Right cardiac atrium (tissue), 5 donors: ENCODE measurements at regions of chr10 and their contacts with region 1.

Region 1: DNA sequence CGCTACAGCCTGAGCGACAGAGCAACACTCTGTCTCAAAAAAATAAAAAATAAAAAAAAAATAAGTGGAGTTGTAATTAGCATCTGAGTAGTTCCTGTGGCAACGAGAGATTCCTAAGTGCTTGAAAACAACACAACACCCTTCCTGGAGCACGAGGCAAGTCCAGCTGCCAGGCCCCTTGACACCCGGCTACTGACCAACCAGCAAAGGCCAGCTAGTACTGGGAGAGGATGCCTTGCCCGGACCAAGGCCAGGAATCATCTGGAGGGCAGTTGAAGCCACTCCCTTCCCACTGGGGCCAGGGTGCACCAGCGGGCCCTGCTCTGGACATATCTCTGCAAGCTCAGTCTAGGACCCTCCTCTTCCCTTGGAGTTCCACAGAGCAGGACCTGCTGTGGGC is 536 bp downstream of the C10orf105 start:
- DNase-seq: peak; percentile 81 to 94 (median 94)
- ATAC-seq: peak; percentile 64 to 76
- H3K4me3 ChIP-seq: no peak overlapping the region
- H3K27ac ChIP-seq: peak overlapping the region; percentile 74
- H3K4me1 ChIP-seq: peaks cover 25% of the 10 kb centered on the region
- H3K27me3 ChIP-seq: no peaks in the 10 kb centered on the region

Region 2: GRCh38 chr10:71649651-71650050 is 69.4 kb before region 1 on chr10:
- intact Hi-C with region 1: no loop called
- DNase-seq: no peak
- ATAC-seq: no peak
- H3K4me3 ChIP-seq: no peak overlapping the region
- H3K27ac ChIP-seq: no peak overlapping the region
- H3K4me1 ChIP-seq: no peaks in the 10 kb centered on the region
- H3K27me3 ChIP-seq: no peaks in the 10 kb centered on the region

Region 3: DNA sequence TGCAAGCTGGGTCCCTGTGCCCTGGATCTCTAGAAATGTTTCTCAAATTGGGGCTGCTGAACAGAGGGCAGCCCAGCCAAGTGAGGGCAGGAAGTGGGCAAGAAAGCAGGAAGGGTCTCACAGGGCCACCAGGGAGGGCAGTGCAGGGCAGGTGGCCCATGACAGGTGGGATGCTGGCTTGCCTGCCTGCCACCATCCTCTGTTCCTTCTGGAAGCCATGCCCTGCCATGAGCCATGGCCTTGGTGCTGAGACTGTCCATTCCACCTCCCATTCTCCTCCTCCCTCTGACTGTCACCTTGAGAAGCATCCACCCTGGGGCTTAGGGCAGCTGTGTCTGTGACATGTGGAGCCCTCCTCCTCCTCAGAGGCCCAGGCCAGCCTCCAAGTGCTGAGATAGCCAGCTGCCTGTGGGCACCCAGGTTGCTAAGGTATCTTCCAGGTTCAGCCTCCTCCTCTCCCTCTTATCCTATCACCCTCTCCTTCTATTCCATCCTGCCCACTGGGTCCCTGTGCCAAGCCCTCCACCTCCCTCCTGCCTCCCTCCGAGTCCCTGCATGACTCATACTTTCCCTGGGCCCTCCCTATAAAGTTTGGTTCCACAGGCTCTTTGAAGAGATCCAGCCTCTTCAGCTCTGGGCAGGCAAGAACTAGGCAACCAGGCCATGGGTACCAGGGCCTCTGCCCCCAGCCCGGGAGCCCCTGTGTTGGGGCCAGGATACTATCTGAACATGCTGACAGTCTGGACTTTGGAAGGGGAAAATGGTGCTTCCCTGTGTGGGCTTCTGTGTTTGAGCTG is 53.0 kb after region 1 on chr10:
- intact Hi-C with region 1: loop called in 1 of 4 experiments (anchors 5 kb)
- DNase-seq: peak; percentile 87 to 89 (median 88)
- ATAC-seq: peak; percentile 67 to 78
- H3K4me3 ChIP-seq: peak overlapping the region; percentile 65
- H3K27ac ChIP-seq: peak overlapping the region; percentile 93
- H3K4me1 ChIP-seq: peaks cover 27% of the 10 kb centered on the region
- H3K27me3 ChIP-seq: no peaks in the 10 kb centered on the region